ENCODE measurements at regions of chr3 and their contacts with region 1.

Region 1: DNA sequence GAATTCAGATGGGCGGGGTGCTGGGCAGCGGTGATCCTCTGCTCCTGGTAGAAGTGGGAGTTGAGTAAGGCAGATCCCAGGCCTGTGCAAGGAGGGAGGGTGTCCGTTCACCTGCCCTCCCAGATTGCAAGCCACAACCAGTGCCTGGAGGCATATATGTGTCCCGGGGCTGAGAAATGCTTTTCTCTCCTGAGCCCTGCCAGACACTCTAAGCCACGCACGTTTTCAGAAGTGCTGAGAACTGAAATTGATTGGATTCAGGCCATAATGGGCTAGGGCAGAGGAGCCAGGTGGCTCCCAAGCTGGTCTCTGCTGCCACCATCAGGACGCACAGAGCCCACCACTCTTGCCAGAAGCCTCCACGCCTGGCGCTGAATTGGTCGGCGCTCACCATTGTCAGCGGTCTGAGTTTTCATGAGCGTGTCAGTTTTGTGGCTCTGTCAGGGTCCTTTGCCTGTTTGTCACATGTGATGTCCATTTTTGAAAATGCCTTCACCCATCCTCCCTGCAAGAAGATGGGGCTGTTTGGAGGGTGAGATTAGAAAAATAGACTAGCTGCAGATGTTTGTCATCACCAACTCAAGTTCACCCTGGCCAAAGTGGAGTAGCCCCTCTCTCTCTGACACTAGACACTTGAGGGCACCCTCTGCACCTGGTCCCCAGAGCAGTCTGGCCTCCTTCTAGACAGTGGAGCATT is 15.4 kb upstream of the BFSP2 start:
- DNase-seq: peak; percentile 55
- H3K4me3 Mint-ChIP-seq: no peak overlapping the region
- H3K27ac Mint-ChIP-seq: no peak overlapping the region
- H3K4me1 Mint-ChIP-seq: no peaks in the 10 kb centered on the region
- H3K27me3 Mint-ChIP-seq: peaks cover 14% of the 10 kb centered on the region

Region 2: DNA sequence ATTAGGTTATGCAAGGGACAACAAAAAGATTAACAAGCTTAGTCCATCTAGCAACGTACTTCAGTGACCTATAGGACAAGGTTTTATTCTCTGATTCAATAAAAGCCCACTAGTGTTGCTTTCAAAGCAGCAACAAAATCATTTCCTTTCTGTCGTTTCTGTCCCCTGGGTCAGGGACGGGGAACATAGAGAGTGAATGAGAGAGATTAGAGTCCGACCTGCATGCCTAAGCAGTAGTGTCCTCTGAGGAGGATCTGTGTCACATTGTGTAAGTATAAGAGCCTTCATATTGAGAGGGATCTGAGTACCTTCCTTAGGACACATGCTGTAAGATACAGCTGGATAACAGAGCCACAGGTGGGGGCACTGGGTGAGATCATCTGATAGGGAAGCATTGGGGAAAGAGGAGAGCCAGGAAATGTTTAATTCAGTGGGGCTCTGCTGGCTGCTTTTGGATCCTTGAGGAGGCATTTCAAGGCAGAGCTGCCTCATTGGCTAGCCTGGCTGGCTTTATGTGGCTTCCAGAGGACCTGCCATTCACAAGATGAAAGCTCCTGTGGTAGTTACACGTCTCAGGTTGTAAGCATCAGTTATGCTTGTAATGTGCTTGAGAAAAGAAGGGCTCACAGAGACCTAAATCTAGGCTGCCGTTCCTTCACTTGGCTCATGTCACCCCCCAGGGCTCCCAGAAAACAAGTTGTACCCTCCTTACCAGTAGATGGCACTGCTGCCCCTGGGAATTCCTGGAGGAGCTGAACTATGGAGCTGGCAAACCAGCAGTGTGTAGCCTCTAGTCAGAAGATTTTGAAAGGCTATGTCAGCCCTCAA is 343.6 kb before region 1 on chr3:
- CTCF ChIA-PET with region 1: interaction called, 12 read pairs
- DNase-seq: peak; percentile 39
- H3K4me3 Mint-ChIP-seq: no peak overlapping the region
- H3K27ac Mint-ChIP-seq: no peak overlapping the region
- H3K4me1 Mint-ChIP-seq: peaks cover 4% of the 10 kb centered on the region
- H3K27me3 Mint-ChIP-seq: peaks cover 47% of the 10 kb centered on the region

Region 3: DNA sequence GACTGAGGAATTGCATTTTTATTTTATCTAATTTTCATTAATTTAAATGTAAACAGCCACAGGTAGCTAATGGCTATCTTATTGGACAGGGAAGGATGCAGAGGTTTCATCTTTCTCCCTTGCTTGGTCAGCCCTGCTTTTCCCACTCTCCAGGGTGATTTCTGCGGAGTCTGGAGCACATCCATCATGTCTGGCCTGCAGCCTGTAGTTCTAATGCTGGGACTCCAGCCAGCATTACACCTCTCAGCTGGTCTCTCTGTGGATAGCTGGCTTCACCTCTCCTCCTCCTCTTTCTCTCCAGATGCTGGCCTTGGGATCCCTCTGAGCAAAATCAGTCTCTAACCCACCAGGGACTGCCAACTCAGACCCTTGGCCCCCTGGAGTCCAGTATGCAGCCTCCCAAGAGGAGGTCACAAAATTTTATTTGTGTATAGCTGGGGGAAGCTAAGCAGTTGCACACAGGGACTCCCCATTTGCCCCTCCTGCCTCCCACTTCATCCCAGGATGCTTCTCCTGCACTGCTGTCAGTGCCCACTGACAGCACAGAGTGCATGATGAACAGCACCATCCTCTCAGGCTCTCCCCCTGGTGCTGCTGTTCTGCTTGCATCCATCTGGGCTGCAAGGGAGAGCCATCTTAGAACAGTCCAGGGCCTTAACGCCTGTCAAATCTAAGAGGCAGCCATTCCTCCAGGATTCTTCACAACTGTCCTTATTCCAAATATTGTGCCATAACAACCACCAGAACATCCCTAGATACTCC is 17.1 kb after region 1 on chr3:
- CTCF ChIA-PET with region 1: no interaction called
- DNase-seq: no peak
- H3K4me3 Mint-ChIP-seq: no peak overlapping the region
- H3K27ac Mint-ChIP-seq: no peak overlapping the region
- H3K4me1 Mint-ChIP-seq: no peaks in the 10 kb centered on the region
- H3K27me3 Mint-ChIP-seq: peaks cover 22% of the 10 kb centered on the region